ENCODE measurements at regions of chr10 and their contacts with region 1.

Region 1: DNA sequence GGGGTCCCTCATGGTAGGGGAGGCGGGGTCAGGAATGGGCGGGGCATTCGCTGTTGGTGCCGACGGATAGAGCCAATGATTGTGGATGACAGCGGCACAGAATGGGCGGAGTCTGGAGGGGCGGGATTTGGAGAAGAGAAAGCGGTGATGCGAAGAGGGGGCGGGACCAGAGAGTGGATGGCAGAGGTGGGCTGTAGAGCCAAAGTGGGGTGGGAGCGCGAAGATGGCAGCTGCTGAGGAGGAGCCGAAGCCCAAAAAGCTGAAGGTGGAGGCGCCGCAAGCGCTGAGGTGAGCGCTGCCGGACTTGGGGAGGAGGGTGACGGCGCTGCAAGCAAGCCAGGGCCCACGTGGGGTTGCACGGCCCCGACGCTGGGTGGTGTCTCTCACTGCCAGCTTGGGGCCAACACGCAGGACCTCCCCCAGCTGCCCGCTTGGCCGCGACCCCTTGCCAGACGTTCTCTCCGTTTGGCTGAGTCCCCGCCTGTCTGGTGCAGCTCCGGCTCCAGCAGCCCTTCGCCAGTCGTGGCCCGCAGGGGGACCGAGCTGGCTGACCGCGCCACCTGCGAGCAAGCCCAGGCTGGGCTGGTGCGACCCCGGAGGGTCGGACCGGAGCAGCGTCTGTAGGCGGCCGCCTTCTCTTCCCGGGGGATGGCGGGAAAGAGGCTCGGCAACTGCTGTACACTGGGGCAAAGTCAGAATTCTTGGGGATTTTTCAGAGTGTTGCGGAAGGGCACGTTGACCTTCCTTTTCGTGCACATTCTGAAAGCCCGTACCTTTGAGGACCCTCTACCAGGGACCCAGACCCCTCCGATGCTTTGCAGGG is at the start of gene ADK:
- DNase-seq: peak; percentile 95
- H3K4me3 ChIP-seq: peak within 1 kb of the TSS; percentile 81 to 90 (median 82)
- H3K27ac ChIP-seq: peak within 1 kb of the TSS; percentile 97
- H3K4me1 ChIP-seq: peaks cover 25% of the 10 kb centered on the region
- H3K27me3 ChIP-seq: no peaks in the 10 kb centered on the region
- CTCF ChIP-seq: peak in 1 of 2 donors; percentile 40
- total RNA-seq, gene ADK: 87.9 to 120 TPM

Region 2: DNA sequence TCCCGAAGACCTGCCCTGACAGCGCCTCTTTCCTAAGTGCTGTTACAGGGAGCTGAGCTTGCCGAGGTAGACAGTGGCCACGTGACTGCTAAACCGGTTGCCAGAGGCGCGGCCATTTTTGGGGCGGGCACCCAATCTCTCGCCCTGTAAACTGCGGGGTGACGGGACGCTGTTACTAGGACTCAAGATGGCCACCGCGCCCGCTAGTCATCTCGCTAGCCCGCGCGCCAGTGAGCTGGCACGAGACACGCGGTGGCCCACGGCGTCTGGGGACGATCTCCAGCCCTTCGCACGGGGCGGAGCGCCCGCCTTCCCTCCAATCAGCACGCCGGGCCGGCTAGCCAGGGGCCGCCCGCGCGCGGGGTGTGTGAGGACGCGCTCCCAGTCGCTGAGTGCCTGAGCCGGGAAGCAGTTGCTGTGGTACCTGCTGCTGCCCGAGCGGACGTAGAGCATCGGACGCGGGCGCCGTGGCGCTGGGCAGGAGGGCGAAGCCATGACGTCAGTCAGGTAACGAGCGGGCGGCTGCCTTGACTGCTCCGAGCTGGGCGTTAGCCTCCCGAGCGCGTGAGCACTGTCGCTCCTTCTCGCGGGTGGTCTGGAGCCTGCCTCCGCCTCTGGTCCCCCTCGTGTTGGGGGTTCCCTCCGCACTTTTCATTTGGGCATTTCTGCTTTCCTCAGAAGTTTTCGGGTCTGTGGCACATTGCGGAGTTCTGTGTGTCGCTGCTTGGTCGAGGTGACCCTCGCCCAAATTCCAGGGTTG is 25.3 kb after region 1 on chr10:
- CTCF ChIA-PET with region 1: interaction called, 4 read pairs
- dilution Hi-C with region 1: no loop called
- in situ Hi-C with region 1: no loop called
- intact Hi-C with region 1: loop called (anchors 1 kb)
- DNase-seq: peak; percentile 99
- H3K4me3 ChIP-seq: peak overlapping the region; percentile 73 to 77 (median 77)
- H3K27ac ChIP-seq: peak overlapping the region; percentile 99
- H3K4me1 ChIP-seq: peaks cover 20% of the 10 kb centered on the region
- H3K27me3 ChIP-seq: no peaks in the 10 kb centered on the region
- CTCF ChIP-seq: no peak

Region 3: DNA sequence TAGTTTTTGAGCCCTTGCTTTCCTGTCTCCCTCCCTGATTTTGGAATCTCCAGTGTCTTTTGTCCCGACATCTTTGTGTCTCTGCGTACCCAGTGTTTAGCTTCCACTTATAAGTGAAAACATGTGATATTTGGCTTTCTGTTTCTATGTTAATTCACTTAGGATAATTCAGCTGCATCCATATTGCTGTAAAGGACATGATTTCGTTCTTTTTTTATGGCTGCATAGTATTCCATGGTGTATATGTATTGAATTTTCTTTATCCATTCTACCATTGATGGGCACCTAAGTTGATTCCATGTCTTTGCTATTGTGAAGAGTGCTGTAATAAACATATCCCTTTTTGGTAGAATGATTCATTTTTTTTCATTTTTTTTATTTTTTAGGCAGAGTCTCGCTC is 48.0 kb after region 1 on chr10:
- CTCF ChIA-PET with region 1: no interaction called
- dilution Hi-C with region 1: no loop called
- in situ Hi-C with region 1: no loop called
- intact Hi-C with region 1: no loop called
- DNase-seq: no peak
- H3K4me3 ChIP-seq: no peak overlapping the region
- H3K27ac ChIP-seq: no peak overlapping the region
- H3K4me1 ChIP-seq: peaks cover 14% of the 10 kb centered on the region
- H3K27me3 ChIP-seq: no peaks in the 10 kb centered on the region
- CTCF ChIP-seq: no peak

Region 4: DNA sequence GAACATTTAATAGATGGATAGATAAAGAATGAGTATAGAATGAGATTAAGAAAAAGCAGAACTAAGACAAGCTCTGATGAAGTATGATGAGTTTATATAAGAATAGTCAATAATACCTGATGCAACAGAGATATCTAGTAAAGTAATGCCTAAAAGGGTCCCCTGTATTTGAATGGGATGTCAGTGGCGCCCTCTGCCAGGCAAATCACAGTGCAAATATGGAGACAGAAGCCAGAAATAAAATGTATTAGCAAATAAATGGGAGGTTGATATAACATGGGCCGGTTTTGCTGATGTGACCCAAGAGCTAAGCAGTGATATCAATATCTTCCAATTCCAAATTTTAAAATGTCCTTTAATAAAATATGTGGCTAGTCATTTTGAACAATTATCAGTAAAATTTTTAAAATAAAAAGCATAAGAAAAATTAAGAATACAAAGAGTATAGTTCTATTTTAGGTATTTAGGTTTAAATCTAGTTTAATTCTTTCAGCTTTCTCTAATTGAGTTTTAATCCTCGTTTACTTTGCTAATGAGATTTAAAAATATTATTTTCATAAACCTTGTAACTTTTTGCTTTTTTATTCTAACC is 62.4 kb after region 1 on chr10:
- CTCF ChIA-PET with region 1: no interaction called
- dilution Hi-C with region 1: loop called (anchors 5 kb)
- in situ Hi-C with region 1: no loop called
- intact Hi-C with region 1: loop called (anchors 1 kb)
- DNase-seq: no peak
- H3K4me3 ChIP-seq: no peak overlapping the region
- H3K27ac ChIP-seq: no peak overlapping the region
- H3K4me1 ChIP-seq: peaks cover 6% of the 10 kb centered on the region
- H3K27me3 ChIP-seq: no peaks in the 10 kb centered on the region
- CTCF ChIP-seq: peak; percentile 46 to 63

Region 5: DNA sequence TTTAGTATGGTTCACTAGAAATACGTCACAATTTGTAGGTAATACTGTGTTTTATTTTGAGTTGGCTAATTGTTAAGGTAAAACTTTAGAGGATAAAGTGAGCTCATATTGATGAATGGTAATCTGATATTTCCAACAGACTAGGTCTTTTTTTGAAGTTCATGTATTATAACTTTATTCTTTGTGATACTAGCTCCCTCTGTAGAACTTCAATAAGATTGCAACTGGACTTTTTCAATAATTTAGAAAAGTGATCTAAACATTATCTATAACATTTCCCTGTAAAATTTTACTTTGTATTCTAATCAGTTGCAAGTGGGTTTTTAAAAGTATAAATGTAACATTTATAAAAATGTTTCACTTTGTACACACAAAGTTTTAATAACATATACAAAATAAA is 83.3 kb after region 1 on chr10:
- CTCF ChIA-PET with region 1: no interaction called
- dilution Hi-C with region 1: no loop called
- in situ Hi-C with region 1: loop called in 1 of 2 experiments (anchors 10 kb)
- intact Hi-C with region 1: loop called (anchors 1 kb)
- DNase-seq: no peak
- H3K4me3 ChIP-seq: no peak overlapping the region
- H3K27ac ChIP-seq: no peak overlapping the region
- H3K4me1 ChIP-seq: peaks cover 11% of the 10 kb centered on the region
- H3K27me3 ChIP-seq: no peaks in the 10 kb centered on the region
- CTCF ChIP-seq: peak; percentile 23 to 42

Region 6: GRCh38 chr10:74332398-74332797 is 181.1 kb after region 1 on chr10:
- CTCF ChIA-PET with region 1: no interaction called
- dilution Hi-C with region 1: no loop called
- in situ Hi-C with region 1: no loop called
- intact Hi-C with region 1: no loop called
- DNase-seq: no peak
- H3K4me3 ChIP-seq: no peak overlapping the region
- H3K27ac ChIP-seq: no peak overlapping the region
- H3K4me1 ChIP-seq: peaks cover 5% of the 10 kb centered on the region
- H3K27me3 ChIP-seq: no peaks in the 10 kb centered on the region
- CTCF ChIP-seq: no peak

Region 7: DNA sequence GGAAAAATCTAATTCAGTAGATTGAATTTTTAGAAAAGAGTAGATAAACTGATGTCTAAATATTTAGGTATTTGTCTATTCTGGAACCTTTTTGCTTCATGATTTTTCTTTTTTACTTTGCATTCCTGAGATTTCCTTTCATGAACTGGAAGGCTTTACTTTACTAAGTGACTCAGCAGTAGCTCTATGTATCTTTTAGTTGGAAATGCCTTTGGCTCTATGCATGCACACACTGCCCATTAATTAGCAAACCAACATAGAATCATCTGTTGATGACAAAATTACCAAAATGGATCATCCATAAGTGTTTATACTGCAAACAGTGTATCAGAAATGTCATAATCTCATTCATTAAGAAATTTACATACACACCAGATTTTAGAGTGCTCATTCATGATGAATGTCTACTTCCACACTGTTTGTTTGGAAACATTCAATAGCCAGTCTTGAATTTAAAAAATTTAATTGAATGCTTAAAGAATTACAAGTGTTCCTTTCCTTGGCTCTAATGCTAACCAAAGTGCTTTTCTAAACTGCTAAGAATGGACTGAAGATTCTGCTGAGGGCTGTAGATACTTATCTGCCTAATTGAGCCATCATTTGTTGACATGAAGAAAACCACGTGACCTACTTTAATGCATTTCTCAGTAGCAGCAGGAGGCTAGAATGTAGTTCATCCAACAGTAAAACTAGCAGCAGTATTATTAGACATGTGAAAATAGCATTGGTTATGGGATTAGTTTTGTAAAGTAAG is 281.8 kb after region 1 on chr10:
- CTCF ChIA-PET with region 1: no interaction called
- dilution Hi-C with region 1: no loop called
- in situ Hi-C with region 1: no loop called
- intact Hi-C with region 1: no loop called
- DNase-seq: peak; percentile 9
- H3K4me3 ChIP-seq: no peak overlapping the region
- H3K27ac ChIP-seq: no peak overlapping the region
- H3K4me1 ChIP-seq: no peaks in the 10 kb centered on the region
- H3K27me3 ChIP-seq: no peaks in the 10 kb centered on the region
- CTCF ChIP-seq: no peak

Region 8: GRCh38 chr10:74518061-74518460 is 366.8 kb after region 1 on chr10:
- CTCF ChIA-PET with region 1: no interaction called
- dilution Hi-C with region 1: no loop called
- in situ Hi-C with region 1: no loop called
- intact Hi-C with region 1: no loop called
- DNase-seq: peak; percentile 23
- H3K4me3 ChIP-seq: no peak overlapping the region
- H3K27ac ChIP-seq: no peak overlapping the region
- H3K4me1 ChIP-seq: no peaks in the 10 kb centered on the region
- H3K27me3 ChIP-seq: no peaks in the 10 kb centered on the region
- CTCF ChIP-seq: no peak

Measured in mammary epithelial cell (primary cell).